Astrocyte of the cerebellum (primary cell): ENCODE measurements at regions of chr19 and their contacts with region 1.

Region 1: GRCh38 chr19:39843919-39844793 is 2.0 kb downstream of the FBL start:
- DNase-seq: peak; percentile 42
- H3K4me3 ChIP-seq: no peak overlapping the region
- CTCF ChIP-seq: peak; percentile 66

Region 2: GRCh38 chr19:39780894-39781293 is 63.3 kb before region 1 on chr19:
- in situ Hi-C with region 1: loop called (anchors 5 kb)
- DNase-seq: no peak
- H3K4me3 ChIP-seq: no peak overlapping the region
- CTCF ChIP-seq: no peak